Breast epithelium (tissue), 4 donors: ENCODE measurements at regions of chr15 and their contacts with region 1.

Region 1: GRCh38 chr15:67109141-67110034 is 44.0 kb downstream of the SMAD3 start:
- DNase-seq: no peak
- H3K4me3 ChIP-seq: no peak overlapping the region
- H3K27ac ChIP-seq: peak overlapping the region; percentile 64 to 87
- H3K4me1 ChIP-seq: peaks cover 12 to 28% of the 10 kb centered on the region in 2 donors
- H3K27me3 ChIP-seq: no peaks in the 10 kb centered on the region
- CTCF ChIP-seq: no peak
- POLR2A ChIP-seq: no peak

Region 2: DNA sequence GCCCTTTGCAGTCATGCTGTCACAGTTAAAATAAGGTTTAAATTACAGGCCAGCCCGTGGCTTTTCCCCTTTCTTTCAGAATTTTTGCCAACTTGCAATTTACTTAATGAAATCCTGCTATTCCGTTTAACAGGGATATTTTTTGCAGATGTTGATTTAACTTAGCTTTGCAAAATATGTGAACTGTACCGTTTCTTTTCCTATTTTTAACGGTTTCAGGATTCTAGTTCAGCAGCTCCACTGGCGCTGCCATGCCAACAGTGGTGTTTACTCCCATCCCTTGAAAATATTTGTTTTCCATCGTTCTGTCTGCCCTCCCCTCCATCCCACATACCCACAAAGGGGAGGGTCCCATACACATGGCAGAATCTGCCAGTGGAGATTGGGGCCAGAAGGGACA is 353.1 kb before region 1 on chr15:
- intact Hi-C with region 1: loop called (anchors 5 kb)
- DNase-seq: no peak
- H3K4me3 ChIP-seq: peak overlapping the region in 1 of 3 donors; percentile 21
- H3K27ac ChIP-seq: peak overlapping the region; percentile 74 to 75
- H3K4me1 ChIP-seq: peaks cover 6 to 30% of the 10 kb centered on the region in 2 donors
- H3K27me3 ChIP-seq: no peaks in the 10 kb centered on the region
- CTCF ChIP-seq: no peak
- POLR2A ChIP-seq: no peak

Region 3: DNA sequence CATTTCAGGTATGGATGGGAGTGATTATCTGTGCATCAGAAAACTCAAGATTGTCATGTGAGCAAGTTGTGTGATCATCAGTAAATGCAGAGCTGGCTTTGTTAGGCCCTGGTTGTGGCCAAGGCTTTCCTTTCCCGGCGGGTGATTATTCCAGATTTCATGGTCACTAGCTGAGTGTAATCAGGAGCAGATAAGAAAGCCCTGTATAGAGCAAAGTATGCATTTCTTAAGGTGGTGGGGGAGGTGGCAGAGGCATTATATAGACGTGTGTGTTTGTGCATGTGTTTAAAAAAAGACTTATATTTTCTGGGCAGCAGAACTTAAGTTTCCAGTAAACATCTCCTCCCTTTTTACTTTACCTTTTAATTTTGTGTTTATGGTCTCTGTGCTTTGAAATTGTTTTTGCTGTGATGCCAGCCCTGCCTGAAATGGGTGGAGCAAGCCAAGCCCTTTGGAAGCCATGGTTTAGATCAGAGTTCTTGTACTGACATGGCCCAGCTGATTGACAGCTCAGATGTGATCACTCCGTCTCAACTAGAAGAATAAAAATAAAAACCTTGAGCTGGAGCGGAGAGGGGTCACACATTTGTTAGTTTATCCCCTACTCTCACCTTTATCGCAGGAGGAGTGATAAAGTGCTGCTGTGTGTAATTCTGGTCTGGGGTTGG is 21.7 kb before region 1 on chr15:
- intact Hi-C with region 1: loop called (anchors 1 kb)
- DNase-seq: no peak
- H3K4me3 ChIP-seq: no peak overlapping the region
- H3K27ac ChIP-seq: no peak overlapping the region
- H3K4me1 ChIP-seq: peaks cover 7 to 14% of the 10 kb centered on the region in 2 donors
- H3K27me3 ChIP-seq: no peaks in the 10 kb centered on the region
- CTCF ChIP-seq: no peak
- POLR2A ChIP-seq: no peak

Region 4: GRCh38 chr15:67495585-67495984 is 386.2 kb after region 1 on chr15:
- intact Hi-C with region 1: no loop called
- DNase-seq: no peak
- H3K4me3 ChIP-seq: no peak overlapping the region
- H3K27ac ChIP-seq: no peak overlapping the region
- H3K4me1 ChIP-seq: no peaks in the 10 kb centered on the region
- H3K27me3 ChIP-seq: no peaks in the 10 kb centered on the region
- CTCF ChIP-seq: no peak
- POLR2A ChIP-seq: no peak

Region 5: GRCh38 chr15:67622110-67622509 is 512.7 kb after region 1 on chr15:
- intact Hi-C with region 1: no loop called
- DNase-seq: no peak
- H3K4me3 ChIP-seq: no peak overlapping the region
- H3K27ac ChIP-seq: no peak overlapping the region
- H3K4me1 ChIP-seq: no peaks in the 10 kb centered on the region
- H3K27me3 ChIP-seq: no peaks in the 10 kb centered on the region
- CTCF ChIP-seq: no peak
- POLR2A ChIP-seq: no peak